B cell (primary cell): ENCODE measurements at regions of chr3 and their contacts with region 1.

Region 1: GRCh38 chr3:71966185-71966584 is 181.2 kb upstream of the PROK2 start:
- DNase-seq: no peak
- ATAC-seq: no peak
- H3K4me3 ChIP-seq: no peak overlapping the region
- H3K4me3 Mint-ChIP-seq: no peak overlapping the region
- H3K27ac ChIP-seq: no peak overlapping the region
- H3K27ac Mint-ChIP-seq: no peak overlapping the region
- H3K4me1 ChIP-seq: no peaks in the 10 kb centered on the region
- H3K4me1 Mint-ChIP-seq: no peaks in the 10 kb centered on the region
- H3K27me3 ChIP-seq: peaks cover 0 to 25% (median 11%) of the 10 kb centered on the region in 4 experiments
- H3K27me3 Mint-ChIP-seq: peaks cover 37% of the 10 kb centered on the region
- CTCF ChIP-seq: no peak

Region 2: DNA sequence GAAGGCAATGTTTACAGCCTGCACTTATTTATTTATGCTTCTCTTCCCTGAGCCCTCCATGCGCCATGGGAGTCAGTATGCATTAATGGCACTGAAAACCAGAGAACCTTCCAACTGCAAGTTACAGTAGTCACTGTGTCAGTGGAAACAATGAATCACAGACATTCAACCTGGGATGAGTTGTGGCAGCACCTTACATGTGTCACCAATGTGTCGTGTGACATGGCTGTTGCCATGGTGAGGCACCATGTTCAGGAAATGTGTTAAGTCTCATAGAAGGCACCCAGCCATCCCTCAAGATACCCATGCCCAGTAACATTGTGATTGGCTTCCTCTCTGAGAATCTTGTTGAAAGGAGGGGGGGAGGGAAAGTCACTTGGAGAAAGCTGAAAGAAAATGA is 487.6 kb before region 1 on chr3:
- CTCF ChIA-PET with region 1: no interaction called
- POLR2A ChIA-PET with region 1: no interaction called
- intact Hi-C with region 1: no loop called
- DNase-seq: peak; percentile 30
- ATAC-seq: peak; percentile 76
- H3K4me3 ChIP-seq: no peak overlapping the region
- H3K4me3 Mint-ChIP-seq: peak overlapping the region; percentile 19
- H3K27ac ChIP-seq: peak overlapping the region in 1 of 2 donors; percentile 7
- H3K27ac Mint-ChIP-seq: peak overlapping the region; percentile 76
- H3K4me1 ChIP-seq: peaks cover 23 to 30% of the 10 kb centered on the region in 2 donors
- H3K4me1 Mint-ChIP-seq: peaks cover 50% of the 10 kb centered on the region
- H3K27me3 ChIP-seq: no peaks in the 10 kb centered on the region
- H3K27me3 Mint-ChIP-seq: no peaks in the 10 kb centered on the region
- CTCF ChIP-seq: no peak

Region 3: DNA sequence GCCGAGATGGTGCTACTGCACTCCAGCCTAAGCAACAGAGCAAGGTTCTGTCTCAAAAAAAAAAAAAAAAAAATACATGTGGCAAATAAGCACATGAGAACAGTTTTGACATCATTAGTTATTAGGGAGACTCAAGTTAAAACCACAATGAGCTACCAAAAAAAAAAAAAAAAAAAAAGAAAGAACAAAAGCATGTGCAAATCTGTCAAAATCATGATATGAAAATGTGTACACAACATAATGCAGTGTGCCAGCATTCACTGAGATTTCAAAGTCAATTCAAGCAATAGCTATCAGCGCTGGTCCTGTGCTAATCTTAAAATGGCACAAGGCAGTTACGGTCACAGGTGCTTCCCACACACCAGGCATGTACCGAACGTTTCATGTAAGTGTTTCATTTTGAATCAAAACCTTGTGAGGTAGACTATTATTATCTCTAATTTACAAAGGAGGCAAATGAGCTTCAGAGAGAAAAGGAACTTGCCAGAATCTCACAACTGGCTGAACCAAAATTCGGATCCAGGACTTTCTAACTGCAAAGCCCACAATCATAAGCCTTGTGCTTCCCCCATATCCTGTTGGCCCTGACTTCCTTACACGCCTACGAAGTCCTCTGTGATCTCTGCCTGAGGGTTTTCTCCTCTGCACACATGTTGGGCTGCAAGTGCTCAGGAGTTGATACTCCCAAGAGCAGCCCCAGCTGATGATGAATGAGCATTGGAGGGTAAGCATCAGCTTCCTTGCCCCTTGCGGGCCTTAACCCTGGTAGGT is 18.8 kb after region 1 on chr3:
- CTCF ChIA-PET with region 1: interaction called, 3 read pairs
- POLR2A ChIA-PET with region 1: interaction called, 14 read pairs
- intact Hi-C with region 1: no loop called
- DNase-seq: peak; percentile 60
- ATAC-seq: peak; percentile 28
- H3K4me3 ChIP-seq: no peak overlapping the region
- H3K4me3 Mint-ChIP-seq: peak overlapping the region; percentile 53
- H3K27ac ChIP-seq: no peak overlapping the region
- H3K27ac Mint-ChIP-seq: no peak overlapping the region
- H3K4me1 ChIP-seq: peaks cover 26 to 54% of the 10 kb centered on the region in 2 donors
- H3K4me1 Mint-ChIP-seq: peaks cover 41% of the 10 kb centered on the region
- H3K27me3 ChIP-seq: peaks cover 0 to 23% (median 4%) of the 10 kb centered on the region in 4 experiments
- H3K27me3 Mint-ChIP-seq: peaks cover 21% of the 10 kb centered on the region
- CTCF ChIP-seq: no peak